WTC11 (cell line): ENCODE measurements at regions of chr11 and their contacts with region 1.

Region 1: DNA sequence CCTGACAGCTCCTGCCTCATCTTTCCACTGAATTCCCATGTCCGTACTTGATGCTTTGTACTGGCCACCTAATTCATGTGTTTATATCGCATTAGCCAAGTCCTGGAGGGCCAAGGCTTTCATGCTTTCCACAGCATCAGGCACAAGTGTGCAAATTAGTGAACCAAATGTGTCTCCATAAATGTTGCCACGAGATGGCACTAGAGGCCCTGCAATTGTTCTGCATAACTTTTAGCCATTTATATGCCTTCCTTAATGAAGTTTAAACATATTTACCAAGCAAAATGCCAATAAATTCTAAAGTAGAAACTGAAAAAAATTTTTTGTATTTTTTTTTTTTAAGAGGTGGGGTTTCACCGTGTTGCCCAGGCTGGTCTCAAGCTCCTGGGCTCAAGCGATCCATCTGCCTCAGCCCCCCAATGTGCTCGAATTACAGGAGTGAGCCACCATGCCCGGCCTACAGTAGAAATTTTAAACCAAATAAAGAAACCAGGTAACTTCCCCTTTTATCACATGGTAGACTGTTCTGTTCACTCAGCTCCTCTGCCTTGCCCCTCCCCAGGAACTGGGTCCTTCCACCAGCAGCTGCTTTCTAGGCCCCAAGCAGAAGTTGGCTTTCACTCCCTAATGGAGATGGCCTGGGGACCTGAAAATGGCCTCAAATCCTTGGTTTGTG is 20.8 kb upstream of the IL18BP start:
- DNase-seq: peak; percentile 33
- ATAC-seq: peak; percentile 60
- H3K4me3 Mint-ChIP-seq: no peak overlapping the region
- H3K27ac Mint-ChIP-seq: no peak overlapping the region
- H3K4me1 Mint-ChIP-seq: peaks cover 2% of the 10 kb centered on the region; the same call in 1 of the 2 replicates
- H3K27me3 Mint-ChIP-seq: no peaks in the 10 kb centered on the region
- CTCF ChIP-seq: peak; percentile 36

Region 2: GRCh38 chr11:72015511-72016171 is 37.8 kb after region 1 on chr11:
- CTCF ChIA-PET with region 1: interaction called, 15 read pairs
- POLR2A ChIA-PET with region 1: no interaction called
- DNase-seq: peak; percentile 63
- ATAC-seq: peak; percentile 62
- H3K4me3 Mint-ChIP-seq: no peak overlapping the region
- H3K27ac Mint-ChIP-seq: no peak overlapping the region
- H3K4me1 Mint-ChIP-seq: no peaks in the 10 kb centered on the region
- H3K27me3 Mint-ChIP-seq: no peaks in the 10 kb centered on the region
- CTCF ChIP-seq: 0 out of 2 replicates have a peak, but pooled peaks have one; percentile 25